Gastrocnemius medialis (tissue), 4 donors: ENCODE measurements at regions of chr6 and their contacts with region 1.

Region 1: DNA sequence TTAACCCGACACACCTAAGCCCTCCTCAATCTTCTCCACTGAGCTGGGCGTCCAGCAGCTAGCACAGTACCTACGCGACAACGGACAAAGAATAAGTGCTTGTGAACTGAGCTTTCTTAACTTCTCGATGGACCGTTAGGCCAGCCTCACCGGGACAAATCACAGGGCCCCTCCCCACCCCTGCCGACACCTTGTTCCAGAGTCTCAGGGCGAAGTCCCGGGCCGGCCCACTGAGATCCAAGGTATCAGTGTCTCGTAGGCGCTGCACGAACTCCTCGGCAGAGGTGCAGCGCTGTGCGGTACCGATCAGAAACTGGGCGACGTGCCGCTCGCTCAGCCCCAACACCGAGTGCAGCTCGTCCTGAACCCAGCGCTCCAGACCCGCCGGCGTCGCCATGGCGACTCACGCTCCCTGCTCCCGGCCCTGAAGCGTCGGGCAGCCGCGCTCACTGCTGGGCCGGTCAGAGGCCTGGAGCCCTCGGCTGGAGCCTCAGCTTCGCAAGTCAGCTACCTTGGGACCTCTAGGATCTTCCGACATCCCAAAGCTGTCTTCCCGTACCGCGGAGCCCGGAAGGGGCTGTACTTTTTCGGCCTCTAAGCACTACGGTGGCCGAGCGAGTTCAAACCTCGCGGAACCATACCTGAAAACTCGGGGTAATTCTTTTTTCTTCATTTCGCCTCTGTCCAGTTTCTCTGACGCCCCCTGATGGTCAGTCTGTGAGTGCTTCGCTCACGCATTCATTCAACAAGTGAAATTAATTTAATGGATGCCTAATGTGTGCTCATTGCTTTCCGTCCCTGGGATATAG is at the start of gene DHX16:
- DNase-seq: peak; percentile 91 to 96
- ATAC-seq: peak; percentile 90 to 94
- H3K4me3 ChIP-seq: peak within 1 kb of the TSS; percentile 78 to 95 (median 91)
- H3K27ac ChIP-seq: peak within 1 kb of the TSS; percentile 78 to 88 (median 82)
- H3K4me1 ChIP-seq: peaks cover 15 to 18% of the 10 kb centered on the region in 2 donors
- H3K27me3 ChIP-seq: no peaks in the 10 kb centered on the region
- CTCF ChIP-seq: peak; percentile 65 to 89 (median 86)
- POLR2A ChIP-seq: peak in 1 of 2 donors; percentile 30
- total RNA-seq, gene DHX16: 39.1 to 74.8 (median 49.4) TPM

Region 2: GRCh38 chr6:29870104-29870503 is 802.5 kb before region 1 on chr6:
- in situ Hi-C with region 1: no loop called
- intact Hi-C with region 1: no loop called
- DNase-seq: no peak
- ATAC-seq: no peak
- H3K4me3 ChIP-seq: no peak overlapping the region
- H3K27ac ChIP-seq: no peak overlapping the region
- H3K4me1 ChIP-seq: no peaks in the 10 kb centered on the region
- H3K27me3 ChIP-seq: peaks cover 0 to 8% (median 3%) of the 10 kb centered on the region in 3 donors
- CTCF ChIP-seq: no peak
- POLR2A ChIP-seq: no peak

Region 3: GRCh38 chr6:30013291-30013922 is 659.2 kb before region 1 on chr6:
- in situ Hi-C with region 1: no loop called
- intact Hi-C with region 1: no loop called
- DNase-seq: no peak
- ATAC-seq: peak; percentile 39 to 58
- H3K4me3 ChIP-seq: no peak overlapping the region
- H3K27ac ChIP-seq: no peak overlapping the region
- H3K4me1 ChIP-seq: no peaks in the 10 kb centered on the region
- H3K27me3 ChIP-seq: peaks cover 10 to 16% (median 12%) of the 10 kb centered on the region in 3 donors
- CTCF ChIP-seq: peak; percentile 25 to 97 (median 71)
- POLR2A ChIP-seq: no peak

Region 4: DNA sequence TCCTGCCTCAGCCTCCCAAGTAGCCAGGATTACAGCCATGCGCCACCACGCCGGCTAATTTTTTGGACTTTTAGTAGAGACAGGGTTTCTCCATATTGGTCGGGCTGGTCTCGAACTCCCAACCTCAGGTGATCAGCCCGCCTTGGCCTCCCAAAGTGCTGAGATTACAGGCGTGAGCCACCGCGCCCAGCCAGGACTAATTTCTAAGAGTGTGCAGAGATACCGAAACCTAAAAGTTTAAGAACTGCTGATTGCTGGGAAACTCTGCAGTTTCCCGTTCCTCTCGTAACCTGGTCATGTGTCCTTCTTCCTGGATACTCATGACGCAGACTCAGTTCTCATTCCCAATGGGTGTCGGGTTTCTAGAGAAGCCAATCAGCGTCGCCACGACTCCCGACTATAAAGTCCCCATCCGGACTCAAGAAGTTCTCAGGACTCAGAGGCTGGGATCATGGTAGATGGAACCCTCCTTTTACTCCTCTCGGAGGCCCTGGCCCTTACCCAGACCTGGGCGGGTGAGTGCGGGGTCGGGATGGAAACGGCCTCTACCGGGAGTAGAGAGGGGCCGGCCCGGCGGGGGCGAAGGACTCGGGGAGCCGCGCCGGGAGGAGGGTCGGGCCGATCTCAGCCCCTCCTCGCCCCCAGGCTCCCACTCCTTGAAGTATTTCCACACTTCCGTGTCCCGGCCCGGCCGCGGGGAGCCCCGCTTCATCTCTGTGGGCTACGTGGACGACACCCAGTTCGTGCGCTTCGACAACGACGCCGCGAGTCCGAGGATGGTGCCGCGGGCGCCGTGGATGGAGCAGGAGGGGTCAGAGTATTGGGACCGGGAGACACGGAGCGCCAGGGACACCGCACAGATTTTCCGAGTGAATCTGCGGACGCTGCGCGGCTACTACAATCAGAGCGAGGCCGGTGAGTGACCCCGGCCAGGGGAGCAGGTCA is 183.3 kb before region 1 on chr6 and contains the start of gene HLA-E:
- in situ Hi-C with region 1: no loop called
- intact Hi-C with region 1: loop called (anchors 5 kb)
- DNase-seq: peak; percentile 91
- ATAC-seq: peak; percentile 100
- H3K4me3 ChIP-seq: peak within 1 kb of the TSS; percentile 55 to 91 (median 76)
- H3K27ac ChIP-seq: peak within 1 kb of the TSS; percentile 77 to 95 (median 86)
- H3K4me1 ChIP-seq: peaks cover 0 to 3% of the 10 kb centered on the region in 2 donors
- H3K27me3 ChIP-seq: peaks cover 5 to 10% (median 9%) of the 10 kb centered on the region in 3 donors
- CTCF ChIP-seq: no peak
- POLR2A ChIP-seq: peak; percentile 83 to 92
- total RNA-seq, gene HLA-E: 135 to 248 (median 157) TPM

Region 5: DNA sequence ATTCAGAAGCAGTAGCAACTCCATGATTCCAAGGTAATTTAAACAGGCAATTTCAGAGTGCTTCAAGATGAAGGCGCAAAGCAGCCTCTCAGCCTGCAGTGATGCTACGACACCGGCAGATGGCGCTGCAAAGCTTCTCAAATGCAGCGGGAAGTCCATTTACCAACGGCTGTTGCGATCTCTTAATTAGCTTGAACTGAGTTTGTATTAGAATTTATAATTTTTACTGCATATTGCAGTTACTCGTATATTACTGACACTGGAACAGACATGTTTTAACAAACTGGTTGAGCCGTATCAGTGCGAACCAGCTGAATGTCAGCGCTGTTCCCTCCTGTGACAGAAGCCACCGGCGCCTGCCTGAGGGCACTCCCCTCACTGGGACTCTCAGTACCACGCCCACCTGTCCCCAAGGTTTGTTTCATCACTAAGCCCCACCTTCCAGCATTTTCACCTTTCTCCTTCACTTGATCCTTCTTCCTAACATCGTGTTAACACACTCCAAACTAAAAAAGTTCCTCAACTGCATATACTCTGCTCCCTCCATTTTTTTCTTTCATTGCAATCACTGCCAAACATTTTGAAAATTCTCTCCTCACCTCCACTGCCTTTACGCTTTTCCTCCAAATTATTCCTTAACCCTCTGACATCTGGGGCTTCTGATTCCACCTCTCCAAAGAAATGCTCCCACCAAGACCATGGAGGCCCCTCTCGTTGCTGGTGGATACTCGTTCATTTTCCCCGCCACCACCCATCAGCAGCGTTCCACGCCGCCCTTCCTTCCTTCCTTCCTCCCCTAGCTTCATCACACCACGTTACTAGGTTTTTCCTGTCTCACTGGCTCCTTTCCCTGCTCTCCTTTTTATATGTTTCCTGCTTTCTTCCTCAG is 130.9 kb before region 1 on chr6:
- in situ Hi-C with region 1: no loop called
- intact Hi-C with region 1: loop called (anchors 5 kb)
- DNase-seq: peak; percentile 45 to 64
- ATAC-seq: peak; percentile 78 to 90
- H3K4me3 ChIP-seq: peak overlapping the region; percentile 36 to 52 (median 40)
- H3K27ac ChIP-seq: peak overlapping the region in 3 of 4 donors; percentile 48 to 59 (median 53)
- H3K4me1 ChIP-seq: peaks cover 5 to 13% of the 10 kb centered on the region in 2 donors
- H3K27me3 ChIP-seq: no peaks in the 10 kb centered on the region
- CTCF ChIP-seq: peak; percentile 84 to 97 (median 93)
- POLR2A ChIP-seq: peak in 1 of 2 donors; percentile 39

Region 6: DNA sequence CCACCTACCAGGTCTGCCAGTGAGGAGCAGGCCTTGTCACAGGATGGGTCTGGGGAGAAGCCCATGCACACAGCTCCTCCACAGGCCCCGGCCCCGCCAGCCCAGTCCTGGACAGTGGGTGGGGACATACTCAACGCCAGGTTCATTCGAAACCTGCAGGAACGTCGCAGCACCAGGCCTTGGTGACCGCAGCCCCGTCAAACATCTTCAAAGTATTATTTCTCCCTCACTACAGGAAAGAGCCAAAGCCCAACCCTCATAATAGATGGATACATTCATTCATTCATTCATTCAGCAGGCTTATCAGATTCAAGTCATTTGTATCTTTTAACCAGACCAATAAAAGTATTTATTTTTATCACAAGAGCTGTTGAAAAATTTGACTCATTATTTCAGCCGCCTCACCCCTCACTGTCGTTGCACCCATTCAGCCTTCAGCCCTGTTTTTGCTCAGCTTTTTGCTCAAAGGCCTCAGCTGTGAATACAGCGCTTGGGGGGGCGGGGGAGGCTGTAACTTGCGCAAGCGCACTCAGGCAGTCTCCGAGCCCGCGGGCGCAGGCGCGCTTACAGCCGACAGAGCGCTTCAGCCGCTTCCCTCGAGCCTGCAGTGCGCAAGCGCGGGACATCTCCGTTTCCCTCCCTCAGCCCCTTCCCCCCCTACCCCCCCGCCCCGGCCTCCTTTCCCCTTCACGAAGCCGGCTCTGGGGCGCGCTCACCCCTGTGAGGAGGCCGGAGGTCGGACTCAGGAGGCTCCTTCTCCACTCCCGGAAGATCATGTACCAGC is 26.0 kb before region 1 on chr6 and contains the start of gene C6orf136:
- in situ Hi-C with region 1: no loop called
- intact Hi-C with region 1: loop called (anchors 1 kb)
- DNase-seq: peak; percentile 84 to 91
- ATAC-seq: peak; percentile 88 to 89
- H3K4me3 ChIP-seq: peak within 1 kb of the TSS; percentile 84 to 100 (median 92)
- H3K27ac ChIP-seq: peak within 1 kb of the TSS; percentile 97 to 100 (median 98)
- H3K4me1 ChIP-seq: peaks cover 11 to 15% of the 10 kb centered on the region in 2 donors
- H3K27me3 ChIP-seq: no peaks in the 10 kb centered on the region
- CTCF ChIP-seq: no peak
- POLR2A ChIP-seq: no peak
- total RNA-seq, gene C6orf136: 11.2 to 24.9 (median 19.8) TPM

Region 7: GRCh38 chr6:30686908-30687658 is 14.4 kb after region 1 on chr6:
- in situ Hi-C with region 1: no loop called
- intact Hi-C with region 1: loop called (anchors 2 kb)
- DNase-seq: peak; percentile 89 to 94
- ATAC-seq: peak; percentile 47 to 60
- H3K4me3 ChIP-seq: peak overlapping the region; percentile 67 to 97 (median 96)
- H3K27ac ChIP-seq: peak overlapping the region; percentile 93 to 99 (median 97)
- H3K4me1 ChIP-seq: peaks cover 39 to 40% of the 10 kb centered on the region in 2 donors
- H3K27me3 ChIP-seq: peaks cover 0 to 2% (median 0%) of the 10 kb centered on the region in 3 donors
- CTCF ChIP-seq: no peak
- POLR2A ChIP-seq: peak; percentile 66 to 70

Region 8: GRCh38 chr6:31087494-31088089 is 414.9 kb after region 1 on chr6:
- in situ Hi-C with region 1: loop called in 1 of 4 experiments (anchors 25 kb)
- intact Hi-C with region 1: loop called (anchors 5 kb)
- DNase-seq: peak; percentile 59 to 73
- ATAC-seq: peak; percentile 93 to 99
- H3K4me3 ChIP-seq: peak overlapping the region in 3 of 4 donors; percentile 11 to 36 (median 13)
- H3K27ac ChIP-seq: peak overlapping the region in 3 of 4 donors; percentile 1 to 36 (median 25)
- H3K4me1 ChIP-seq: peaks cover 8 to 9% of the 10 kb centered on the region in 2 donors
- H3K27me3 ChIP-seq: no peaks in the 10 kb centered on the region
- CTCF ChIP-seq: peak; percentile 74 to 82 (median 81)
- POLR2A ChIP-seq: no peak